Calu3 (cell line): ENCODE measurements at regions of chr22 and their contacts with region 1.

Region 1: DNA sequence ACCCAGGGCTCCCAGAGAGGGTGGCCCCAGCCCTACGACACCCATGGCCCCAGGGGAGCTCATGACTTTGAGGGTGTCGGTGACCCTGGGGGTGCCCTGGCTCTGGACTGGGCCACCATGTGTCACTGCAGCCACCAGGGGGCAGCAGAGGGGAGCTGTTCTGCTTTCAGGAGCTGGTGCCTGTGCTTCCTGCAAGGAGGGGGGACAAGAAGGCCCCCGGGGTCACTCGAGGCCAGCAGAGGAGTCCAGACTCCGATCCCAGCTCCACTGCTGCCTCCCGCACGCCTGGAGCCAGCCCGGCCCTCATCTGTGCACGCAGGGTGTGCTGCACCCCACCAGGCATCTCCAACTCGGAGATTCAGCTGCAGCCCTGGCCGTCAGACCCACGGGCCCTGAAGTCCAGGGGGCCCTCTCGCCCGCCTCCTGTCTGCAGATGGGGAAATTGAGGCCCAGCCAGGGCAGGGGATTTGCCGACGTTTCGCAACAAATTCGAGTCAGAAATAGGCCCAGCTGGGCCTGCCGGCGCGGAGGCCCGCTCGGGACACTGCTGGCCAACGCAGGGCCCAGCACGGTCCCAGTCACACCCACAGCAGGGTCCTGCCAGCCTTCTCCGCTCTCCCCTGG is 29.5 kb upstream of the WNT7B start:
- DNase-seq: peak; percentile 94
- H3K4me3 Mint-ChIP-seq: peak overlapping the region; percentile 55
- H3K27ac Mint-ChIP-seq: peak overlapping the region; percentile 27
- H3K4me1 Mint-ChIP-seq: peaks cover 14% of the 10 kb centered on the region
- H3K27me3 Mint-ChIP-seq: peaks cover 7% of the 10 kb centered on the region
- CTCF ChIP-seq: peak; percentile 99

Region 2: GRCh38 chr22:45932071-45932470 is 74.4 kb before region 1 on chr22:
- CTCF ChIA-PET with region 1: no interaction called
- intact Hi-C with region 1: no loop called
- DNase-seq: no peak
- H3K4me3 Mint-ChIP-seq: no peak overlapping the region
- H3K27ac Mint-ChIP-seq: peak overlapping the region; percentile 66
- H3K4me1 Mint-ChIP-seq: peaks cover 37% of the 10 kb centered on the region
- H3K27me3 Mint-ChIP-seq: no peaks in the 10 kb centered on the region
- CTCF ChIP-seq: no peak

Region 3: GRCh38 chr22:46035742-46036557 is 29.5 kb after region 1 on chr22:
- CTCF ChIA-PET with region 1: interaction called, 58 read pairs
- intact Hi-C with region 1: no loop called
- DNase-seq: peak; percentile 99
- H3K4me3 Mint-ChIP-seq: peak overlapping the region; percentile 83
- H3K27ac Mint-ChIP-seq: no peak overlapping the region
- H3K4me1 Mint-ChIP-seq: no peaks in the 10 kb centered on the region
- H3K27me3 Mint-ChIP-seq: no peaks in the 10 kb centered on the region
- CTCF ChIP-seq: no peak

Region 4: GRCh38 chr22:46057762-46058420 is 51.4 kb after region 1 on chr22:
- CTCF ChIA-PET with region 1: interaction called, 11 read pairs
- intact Hi-C with region 1: no loop called
- DNase-seq: no peak
- H3K4me3 Mint-ChIP-seq: no peak overlapping the region
- H3K27ac Mint-ChIP-seq: no peak overlapping the region
- H3K4me1 Mint-ChIP-seq: peaks cover 16% of the 10 kb centered on the region
- H3K27me3 Mint-ChIP-seq: no peaks in the 10 kb centered on the region
- CTCF ChIP-seq: no peak

Region 5: DNA sequence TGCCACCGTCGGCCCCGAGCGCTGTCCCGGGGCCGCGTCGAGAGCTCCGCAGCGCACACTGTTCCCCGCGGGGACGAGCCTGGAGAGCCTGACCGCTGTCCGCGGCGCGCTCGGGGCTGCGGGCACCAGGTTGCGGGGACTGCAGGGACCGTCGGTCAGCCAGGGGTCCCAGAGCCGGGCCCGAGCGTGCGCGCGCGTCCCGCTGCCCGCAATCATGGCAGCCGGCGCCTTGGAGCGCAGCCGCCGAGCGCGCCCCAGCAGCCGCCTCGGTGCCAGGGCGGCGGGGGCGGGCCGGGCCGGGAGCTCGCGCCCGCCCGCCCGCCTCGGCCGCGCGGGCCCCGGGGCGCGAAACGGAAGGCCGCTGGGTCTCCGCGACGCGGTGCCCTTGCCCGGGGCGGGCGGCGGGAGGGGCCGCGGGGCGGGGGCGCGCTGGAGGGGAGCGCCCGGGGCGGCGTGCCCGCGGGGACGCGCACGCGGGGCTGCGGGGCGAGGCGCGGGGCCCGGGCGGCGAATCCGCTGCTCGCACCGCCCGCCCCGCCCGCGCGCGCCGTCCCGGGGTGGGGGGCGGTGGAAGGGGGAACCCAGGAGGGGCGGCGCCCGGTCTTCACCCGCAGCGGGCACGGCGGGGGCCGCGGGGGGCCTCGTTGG is 64.4 kb after region 1 on chr22:
- CTCF ChIA-PET with region 1: interaction called, 15 read pairs
- intact Hi-C with region 1: no loop called
- DNase-seq: peak; percentile 85
- H3K4me3 Mint-ChIP-seq: peak overlapping the region; percentile 83
- H3K27ac Mint-ChIP-seq: peak overlapping the region; percentile 99
- H3K4me1 Mint-ChIP-seq: peaks cover 15% of the 10 kb centered on the region
- H3K27me3 Mint-ChIP-seq: no peaks in the 10 kb centered on the region
- CTCF ChIP-seq: no peak

Region 6: DNA sequence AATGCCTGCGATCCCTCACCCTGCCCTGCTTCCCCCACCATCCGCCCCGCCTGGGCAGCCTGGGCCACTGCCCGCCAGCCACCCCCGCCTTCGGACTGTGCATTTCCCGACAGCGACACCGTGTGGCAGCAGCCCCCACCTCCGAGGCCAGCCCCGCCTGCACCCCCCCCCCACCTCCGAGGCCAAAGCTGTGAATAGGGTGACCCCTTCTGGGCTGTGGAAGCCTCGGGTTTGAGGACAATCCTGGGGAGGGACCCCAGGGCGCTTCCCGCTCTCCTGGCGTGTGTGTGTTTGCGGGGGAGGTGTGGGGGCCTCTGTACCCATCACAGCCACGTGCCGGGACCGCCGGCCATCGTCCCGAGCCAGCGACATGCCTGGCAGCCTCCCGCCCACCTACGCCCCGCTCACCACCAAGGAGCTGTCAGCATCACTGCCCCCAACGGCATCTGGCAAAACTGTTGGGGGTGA is 110.0 kb after region 1 on chr22:
- CTCF ChIA-PET with region 1: interaction called, 77 read pairs
- intact Hi-C with region 1: loop called (anchors 2 kb)
- DNase-seq: peak; percentile 95
- H3K4me3 Mint-ChIP-seq: no peak overlapping the region
- H3K27ac Mint-ChIP-seq: peak overlapping the region; percentile 85
- H3K4me1 Mint-ChIP-seq: peaks cover 26% of the 10 kb centered on the region
- H3K27me3 Mint-ChIP-seq: no peaks in the 10 kb centered on the region
- CTCF ChIP-seq: peak; percentile 85